Panc1 (cell line): ENCODE measurements at regions of chr2 and their contacts with region 1.

Region 1: DNA sequence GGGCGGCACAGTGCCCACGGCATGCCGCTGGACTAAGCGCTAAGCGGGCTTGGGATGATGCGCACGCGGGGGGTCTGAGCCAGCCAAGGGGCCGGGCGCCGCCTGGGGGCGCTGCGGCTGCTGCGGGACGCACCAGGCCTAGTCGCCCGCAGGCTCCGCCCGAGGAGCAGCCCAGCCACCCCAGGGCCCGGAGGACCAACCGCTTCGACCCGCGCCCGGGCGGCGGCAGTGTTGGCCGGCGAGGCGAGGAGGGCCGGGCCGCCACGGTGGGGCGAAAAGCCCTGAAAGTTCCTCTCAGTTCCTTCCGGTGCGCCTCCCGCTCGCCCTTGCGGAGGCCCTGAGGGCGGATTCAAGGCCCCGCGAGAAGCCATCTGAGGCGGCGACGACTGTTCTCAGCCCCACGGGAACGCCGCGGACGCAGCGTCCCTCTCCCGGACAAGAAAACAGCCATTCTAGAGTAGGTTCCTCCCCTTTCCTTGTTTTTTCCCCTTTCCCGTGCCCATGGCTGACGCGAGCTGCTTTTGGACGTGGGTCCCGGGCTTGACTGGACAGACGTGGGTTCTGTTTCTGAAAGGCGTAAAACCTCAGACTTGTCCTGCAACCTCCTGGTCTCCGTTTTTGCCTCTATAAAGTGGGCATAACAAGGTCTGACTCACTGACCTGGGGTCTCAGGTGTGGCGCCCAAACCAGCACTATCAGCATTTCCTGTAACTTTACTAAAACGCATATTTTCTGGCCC is at the start of gene ANKAR:
- DNase-seq: peak; percentile 56
- ATAC-seq: peak; percentile 99
- H3K4me3 ChIP-seq: peak within 1 kb of the TSS; percentile 71 to 76
- H3K27ac ChIP-seq: peak within 1 kb of the TSS; percentile 97
- H3K4me1 ChIP-seq: no peaks in the 10 kb centered on the region; the same call in 1 of the 2 replicates
- H3K27me3 ChIP-seq: no peaks in the 10 kb centered on the region
- CTCF ChIP-seq: peak; percentile 97
- total RNA-seq, gene ANKAR: 4.4 TPM

Region 2: DNA sequence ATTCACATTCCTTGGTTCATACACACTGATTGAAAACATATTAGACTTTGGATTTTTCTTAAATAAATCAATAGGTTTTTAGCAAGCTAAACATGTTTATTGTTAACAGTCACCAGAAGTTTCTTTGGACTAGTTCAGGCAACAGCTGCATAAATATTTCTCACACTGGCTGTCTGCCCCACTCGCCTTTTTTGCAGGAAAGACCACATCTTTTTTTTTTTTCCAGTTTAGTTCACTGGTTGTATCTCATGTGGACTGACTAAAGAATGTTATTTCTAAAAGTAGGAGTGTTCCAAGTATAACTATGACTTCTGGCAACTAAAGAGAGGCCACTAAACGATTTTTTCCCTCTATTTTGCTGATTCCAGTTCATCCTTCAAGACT is 125.1 kb before region 1 on chr2:
- CTCF ChIA-PET with region 1: no interaction called
- POLR2A ChIA-PET with region 1: no interaction called
- in situ Hi-C with region 1: no loop called
- intact Hi-C with region 1: no loop called
- DNase-seq: no peak
- ATAC-seq: no peak
- H3K4me3 ChIP-seq: no peak overlapping the region
- H3K27ac ChIP-seq: no peak overlapping the region
- H3K4me1 ChIP-seq: no peaks in the 10 kb centered on the region
- H3K27me3 ChIP-seq: peaks cover 3% of the 10 kb centered on the region; the same call in 1 of the 2 replicates
- CTCF ChIP-seq: no peak

Region 3: DNA sequence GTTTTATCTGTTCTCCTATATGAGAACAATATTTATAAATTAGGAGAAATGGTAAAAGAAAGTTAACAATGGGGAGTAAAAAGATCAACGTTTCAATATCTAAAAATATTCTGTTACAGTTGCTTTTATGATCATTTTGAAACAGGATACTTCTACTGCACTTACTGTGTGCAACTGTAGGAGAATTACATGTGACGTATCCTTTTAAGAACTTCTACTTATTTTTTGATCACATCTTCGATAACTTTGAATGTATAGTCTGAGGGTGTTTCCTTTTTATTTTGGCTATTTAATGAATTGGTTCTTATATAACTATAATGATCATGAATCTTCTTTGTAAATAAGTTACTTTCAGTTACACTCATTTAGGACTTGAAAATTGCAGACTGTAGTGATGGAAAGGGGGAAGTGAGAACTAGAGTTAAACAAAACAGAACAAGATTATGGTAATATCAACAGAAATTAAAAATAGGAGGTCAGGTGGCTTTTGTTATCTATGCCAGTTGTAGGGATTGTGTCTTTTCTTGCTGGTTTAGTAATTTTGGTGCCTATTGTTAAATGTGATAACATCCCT is 278.1 kb after region 1 on chr2:
- CTCF ChIA-PET with region 1: no interaction called
- POLR2A ChIA-PET with region 1: no interaction called
- in situ Hi-C with region 1: no loop called
- intact Hi-C with region 1: no loop called
- DNase-seq: no peak
- ATAC-seq: no peak
- H3K4me3 ChIP-seq: no peak overlapping the region
- H3K27ac ChIP-seq: no peak overlapping the region
- H3K4me1 ChIP-seq: no peaks in the 10 kb centered on the region
- H3K27me3 ChIP-seq: no peaks in the 10 kb centered on the region
- CTCF ChIP-seq: no peak

Region 4: DNA sequence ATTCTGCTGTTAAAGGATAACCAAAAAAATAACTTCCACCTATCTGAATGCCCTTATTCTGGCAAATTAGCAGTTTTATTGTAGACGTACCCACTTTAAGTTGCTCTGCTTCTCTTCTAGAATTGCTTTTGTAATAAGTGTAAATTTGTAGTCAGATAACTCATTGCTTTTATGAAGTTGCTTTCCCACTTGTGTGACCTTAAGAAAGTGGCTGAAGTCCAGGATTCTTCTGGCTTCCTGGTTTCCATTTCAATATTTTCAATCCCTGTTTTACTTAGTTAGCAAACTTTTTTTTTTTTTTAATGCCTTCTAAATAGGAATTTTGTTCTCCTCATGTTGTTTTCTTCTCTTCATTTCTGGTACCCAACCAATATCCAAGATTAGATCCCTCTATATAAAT is 1265.9 kb after region 1 on chr2:
- CTCF ChIA-PET with region 1: no interaction called
- POLR2A ChIA-PET with region 1: interaction called, 15 read pairs
- in situ Hi-C with region 1: no loop called
- intact Hi-C with region 1: no loop called
- DNase-seq: no peak
- ATAC-seq: no peak
- H3K4me3 ChIP-seq: no peak overlapping the region
- H3K27ac ChIP-seq: no peak overlapping the region
- H3K4me1 ChIP-seq: no peaks in the 10 kb centered on the region
- H3K27me3 ChIP-seq: no peaks in the 10 kb centered on the region
- CTCF ChIP-seq: no peak